ENCODE measurements at regions of chr9 and their contacts with region 1.

Region 1: GRCh38 chr9:124708633-124709291 is 62.3 kb downstream of the NR6A1 start:
- DNase-seq: no peak
- ATAC-seq: no peak
- H3K4me3 Mint-ChIP-seq: no peak overlapping the region
- H3K27ac Mint-ChIP-seq: no peak overlapping the region
- H3K4me1 Mint-ChIP-seq: no peaks in the 10 kb centered on the region
- H3K27me3 Mint-ChIP-seq: peaks cover 16% of the 10 kb centered on the region

Region 2: DNA sequence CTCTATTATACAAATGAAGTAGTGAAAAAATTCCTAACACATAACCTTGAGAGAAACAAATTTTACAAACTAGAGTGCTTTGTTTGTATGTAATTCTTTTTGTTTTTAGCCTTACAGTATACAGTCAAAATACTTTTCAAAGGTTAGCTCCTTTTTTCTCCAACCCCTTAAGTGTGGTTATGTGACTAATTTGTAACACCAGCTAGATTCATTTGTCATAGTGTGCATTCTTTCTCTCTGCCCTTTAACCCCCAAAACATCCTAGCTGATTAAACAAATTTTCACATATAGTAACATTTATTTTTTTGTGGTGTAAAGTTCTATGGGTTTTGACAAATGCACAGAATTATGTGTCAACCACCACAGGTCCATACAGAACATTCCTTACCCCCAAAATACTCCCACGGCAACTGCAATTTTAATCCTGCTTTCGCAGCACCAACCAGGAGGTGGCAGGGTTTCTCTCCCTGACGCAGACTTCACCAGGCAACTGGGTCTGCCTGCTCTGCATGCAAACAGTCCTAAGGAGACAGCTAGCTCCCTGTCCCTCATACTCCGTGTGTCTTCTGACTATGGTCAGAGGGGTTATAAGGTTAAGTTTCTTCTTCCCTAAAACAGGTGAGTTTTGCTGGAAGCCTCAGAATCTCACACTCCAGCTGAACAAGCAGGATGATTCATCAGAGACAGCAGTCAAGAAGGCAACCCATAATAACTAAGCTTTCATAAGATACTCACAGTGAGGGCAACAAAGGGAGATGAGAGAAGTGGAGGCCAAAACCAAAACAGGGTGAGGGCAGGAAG is 157.1 kb before region 1 on chr9:
- CTCF ChIA-PET with region 1: interaction called, 33 read pairs
- POLR2A ChIA-PET with region 1: no interaction called
- DNase-seq: peak; percentile 47
- ATAC-seq: peak; percentile 78
- H3K4me3 Mint-ChIP-seq: no peak overlapping the region
- H3K27ac Mint-ChIP-seq: no peak overlapping the region
- H3K4me1 Mint-ChIP-seq: peaks cover 8% of the 10 kb centered on the region
- H3K27me3 Mint-ChIP-seq: peaks cover 6% of the 10 kb centered on the region

Region 3: DNA sequence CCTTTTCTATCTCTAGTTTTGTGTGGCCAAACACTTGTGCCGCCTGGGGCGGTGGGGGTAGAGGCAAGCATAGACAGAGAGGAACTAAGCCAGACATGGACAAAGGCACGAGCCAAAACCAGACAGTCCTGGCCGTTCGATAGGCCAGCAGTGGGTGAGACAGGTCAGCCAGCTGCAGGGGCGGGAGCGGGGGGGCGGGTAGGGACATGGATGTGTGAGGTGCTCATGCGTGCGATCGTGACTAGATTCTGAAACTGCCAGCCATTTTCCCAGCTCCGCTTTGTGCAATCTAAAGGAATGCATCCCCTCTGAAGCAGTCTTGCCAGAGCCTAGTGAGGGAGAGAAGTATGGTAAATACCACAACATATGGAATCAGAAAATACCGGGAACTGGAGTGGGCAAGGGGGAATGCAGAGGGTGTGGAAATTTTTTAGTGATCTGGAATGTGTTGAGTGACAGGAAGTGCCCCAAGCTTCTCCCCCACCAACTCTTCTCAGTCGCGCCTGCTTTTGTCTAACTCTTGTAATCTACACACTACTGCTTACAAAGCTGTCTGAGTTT is 49.6 kb before region 1 on chr9:
- CTCF ChIA-PET with region 1: interaction called, 10 read pairs
- POLR2A ChIA-PET with region 1: interaction called, 3 read pairs
- DNase-seq: peak; percentile 34
- ATAC-seq: peak; percentile 52
- H3K4me3 Mint-ChIP-seq: peak overlapping the region; percentile 75
- H3K27ac Mint-ChIP-seq: peak overlapping the region; percentile 31
- H3K4me1 Mint-ChIP-seq: peaks cover 27% of the 10 kb centered on the region
- H3K27me3 Mint-ChIP-seq: peaks cover 13% of the 10 kb centered on the region

Region 4: DNA sequence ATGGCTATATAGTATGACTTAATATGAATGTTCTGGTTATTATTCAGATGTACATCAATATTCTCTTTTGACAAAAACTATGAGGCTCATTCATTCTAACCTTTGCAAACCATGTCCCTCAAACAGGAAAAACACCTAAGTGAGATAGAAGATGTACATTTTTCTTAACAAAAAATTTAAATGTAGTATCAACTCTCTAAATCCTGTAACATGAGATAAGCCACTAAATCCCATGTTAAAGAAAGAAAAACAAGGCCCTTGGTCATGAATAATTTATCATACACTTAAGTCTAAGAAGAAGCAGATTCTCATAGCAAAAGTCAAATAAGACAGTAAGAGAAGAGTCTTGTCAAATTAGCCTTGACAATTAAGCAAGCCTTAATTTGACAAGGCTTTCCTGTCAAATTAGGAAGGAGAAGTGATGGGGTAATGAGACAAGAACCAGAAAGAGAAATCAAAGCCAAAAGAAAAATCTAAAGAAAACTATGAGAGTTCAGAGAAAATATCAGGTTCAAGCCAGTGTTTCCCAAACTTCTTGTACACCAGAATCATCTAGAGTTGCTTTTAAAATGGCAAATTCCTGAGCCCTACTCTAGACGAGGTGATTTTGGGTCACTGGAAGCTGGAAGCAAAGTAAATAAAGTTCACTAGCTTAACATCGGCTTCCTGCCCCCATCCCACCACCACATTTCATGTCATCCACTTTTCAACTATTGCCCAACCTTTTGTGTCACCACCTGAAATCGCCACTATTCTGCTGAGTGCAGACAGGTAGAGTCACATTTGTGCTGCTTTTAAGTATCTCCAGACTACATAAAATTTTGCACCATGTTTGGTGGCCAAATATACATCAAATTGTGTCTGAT is 14.1 kb before region 1 on chr9:
- CTCF ChIA-PET with region 1: interaction called, 10 read pairs
- POLR2A ChIA-PET with region 1: no interaction called
- DNase-seq: no peak
- ATAC-seq: no peak
- H3K4me3 Mint-ChIP-seq: no peak overlapping the region
- H3K27ac Mint-ChIP-seq: no peak overlapping the region
- H3K4me1 Mint-ChIP-seq: no peaks in the 10 kb centered on the region
- H3K27me3 Mint-ChIP-seq: peaks cover 9% of the 10 kb centered on the region

Region 5: DNA sequence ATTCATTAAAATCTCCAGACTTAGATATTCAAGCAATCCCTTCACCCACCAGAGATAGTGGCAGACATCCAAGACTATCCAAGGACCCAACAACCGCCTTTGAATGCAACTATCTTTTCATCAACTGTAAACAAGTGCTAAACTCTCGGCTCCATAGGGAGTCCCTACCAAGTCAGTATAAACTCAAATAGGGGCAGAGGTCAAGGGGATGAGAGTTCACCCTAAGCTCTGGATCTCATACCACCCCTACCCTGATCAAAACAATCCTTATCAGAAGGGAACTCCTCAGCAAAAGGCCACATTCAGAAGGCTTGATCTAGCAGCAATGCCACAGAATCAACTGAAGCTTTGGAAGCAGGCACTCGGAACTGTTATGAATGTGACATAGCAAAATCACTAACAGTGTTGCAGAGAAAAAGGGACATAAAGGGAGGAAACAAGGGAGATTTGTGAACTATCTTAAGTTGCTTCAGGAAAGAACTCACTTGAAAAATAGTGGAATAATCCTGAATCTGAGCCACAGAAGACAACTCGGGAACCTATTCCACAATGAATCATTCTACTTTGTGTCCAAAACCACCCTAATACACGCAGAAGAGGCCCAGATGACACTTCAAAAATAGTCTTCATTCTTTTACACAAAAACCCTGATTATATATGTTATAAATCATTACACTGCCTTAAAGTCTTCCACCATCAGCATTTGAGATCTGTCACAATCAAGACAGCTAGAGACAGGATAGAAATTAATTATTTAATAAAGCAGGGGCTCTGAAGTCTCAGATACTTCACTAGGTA is 12.5 kb after region 1 on chr9:
- CTCF ChIA-PET with region 1: interaction called, 11 read pairs
- POLR2A ChIA-PET with region 1: no interaction called
- DNase-seq: no peak
- ATAC-seq: no peak
- H3K4me3 Mint-ChIP-seq: no peak overlapping the region
- H3K27ac Mint-ChIP-seq: no peak overlapping the region
- H3K4me1 Mint-ChIP-seq: no peaks in the 10 kb centered on the region
- H3K27me3 Mint-ChIP-seq: peaks cover 19% of the 10 kb centered on the region